Posterior vena cava (tissue), 2 donors: ENCODE measurements at regions of chr14 and their contacts with region 1.

Region 1: GRCh38 chr14:102875652-102876051 is 46.8 kb upstream of the AMN start:
- DNase-seq: no peak

Region 2: GRCh38 chr14:102815041-102815440 is 60.6 kb before region 1 on chr14:
- intact Hi-C with region 1: loop called in 1 of 2 experiments (anchors 2 kb)
- DNase-seq: no peak